Activated CD4-positive, alpha-beta T cell treated with anti-CD3 and anti-CD28 coated beads, Interleukin-2, amount 10 ng/mL, durations not matched to agents 24 days and 14 days (primary cell): ENCODE measurements at regions of chr14 and their contacts with region 1.

Region 1: DNA sequence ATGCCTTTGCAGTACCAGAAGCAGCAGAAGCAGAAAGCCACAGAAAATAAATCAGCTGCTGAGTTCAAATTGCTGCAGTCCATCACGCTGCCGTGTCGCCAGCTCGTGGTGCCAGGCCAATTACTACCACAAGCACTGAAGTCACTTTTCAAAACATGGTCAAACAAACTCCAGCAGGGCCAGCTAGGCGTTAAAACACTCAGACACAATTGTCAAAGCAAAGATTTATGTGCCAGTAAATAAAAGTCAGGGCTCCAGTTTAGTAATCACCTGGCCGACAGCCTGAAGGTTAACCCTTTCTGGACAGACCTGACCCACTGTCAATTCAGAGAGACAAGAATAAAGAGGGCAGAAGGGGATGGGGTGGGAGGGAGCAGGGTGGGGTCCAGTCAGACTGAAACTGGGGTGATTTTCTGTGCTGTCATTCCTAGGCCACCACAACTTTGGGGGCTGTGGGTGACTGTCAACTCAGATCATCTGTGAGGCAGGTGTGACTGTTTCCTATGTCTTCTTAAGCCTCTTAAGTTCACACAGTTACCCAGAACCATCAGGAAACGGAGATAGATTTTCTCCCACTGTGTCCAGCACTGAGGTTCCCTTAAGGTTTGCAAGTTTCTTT is 109.8 kb upstream of the FUT8 start:
- DNase-seq: peak; percentile 82
- H3K4me3 Mint-ChIP-seq: peak overlapping the region; percentile 62
- H3K27ac Mint-ChIP-seq: peak overlapping the region; percentile 97
- H3K4me1 Mint-ChIP-seq: peaks cover 67% of the 10 kb centered on the region
- H3K27me3 Mint-ChIP-seq: no peaks in the 10 kb centered on the region

Region 2: DNA sequence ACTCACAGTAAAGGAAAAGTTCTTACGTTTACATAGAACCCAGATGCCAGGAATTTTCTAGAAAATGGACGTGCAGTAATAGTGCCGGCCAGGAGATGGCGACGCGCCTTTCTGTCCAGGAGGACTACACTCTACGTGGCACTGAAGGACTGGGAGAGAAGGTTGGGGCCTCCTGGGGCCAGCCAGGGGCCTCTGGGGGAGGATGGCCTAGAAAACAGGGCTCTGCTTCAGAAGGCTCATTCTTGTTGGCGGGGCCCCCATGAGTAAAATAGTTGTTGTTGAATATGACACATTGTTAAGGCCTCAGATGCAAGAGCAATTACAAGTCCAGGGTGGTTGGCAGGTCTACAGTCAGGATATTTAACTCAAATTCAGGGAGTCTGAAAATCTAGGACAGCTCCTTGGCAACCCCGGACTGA is 80.2 kb before region 1 on chr14:
- intact Hi-C with region 1: loop called (anchors 2 kb)
- DNase-seq: peak; percentile 86
- H3K4me3 Mint-ChIP-seq: no peak overlapping the region
- H3K27ac Mint-ChIP-seq: peak overlapping the region; percentile 2
- H3K4me1 Mint-ChIP-seq: peaks cover 45% of the 10 kb centered on the region
- H3K27me3 Mint-ChIP-seq: no peaks in the 10 kb centered on the region

Region 3: GRCh38 chr14:65321370-65321875 is 18.7 kb after region 1 on chr14:
- intact Hi-C with region 1: loop called (anchors 2 kb)
- DNase-seq: peak; percentile 73
- H3K4me3 Mint-ChIP-seq: peak overlapping the region; percentile 30
- H3K27ac Mint-ChIP-seq: peak overlapping the region; percentile 81
- H3K4me1 Mint-ChIP-seq: peaks cover 48% of the 10 kb centered on the region
- H3K27me3 Mint-ChIP-seq: no peaks in the 10 kb centered on the region

Region 4: DNA sequence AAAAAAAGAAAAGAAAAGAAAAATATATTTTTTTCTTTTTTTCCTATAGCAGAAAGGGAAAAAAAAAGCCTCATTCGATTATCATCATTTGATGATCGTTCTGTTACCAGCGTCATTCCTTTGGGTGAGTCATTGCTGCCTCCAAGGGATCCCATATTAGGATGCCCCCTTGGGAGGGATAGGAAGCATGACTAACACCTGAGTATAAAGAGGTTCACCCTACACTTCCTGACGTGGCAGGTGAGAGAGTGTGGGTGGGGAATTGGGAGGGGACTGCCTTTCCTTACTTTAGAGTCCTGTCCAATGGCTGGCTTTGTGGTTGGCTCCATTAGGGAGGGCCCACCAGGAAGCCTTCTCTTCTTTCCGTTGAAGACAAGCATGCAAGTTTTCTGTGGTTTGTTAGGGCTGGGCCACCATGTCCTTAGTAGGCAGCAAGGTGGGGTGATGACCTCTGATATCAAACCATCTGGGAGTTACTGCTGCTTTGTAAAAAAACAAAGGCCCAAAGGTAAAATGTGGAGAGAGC is 53.7 kb after region 1 on chr14:
- intact Hi-C with region 1: loop called (anchors 2 kb)
- DNase-seq: peak; percentile 77
- H3K4me3 Mint-ChIP-seq: peak overlapping the region; percentile 34
- H3K27ac Mint-ChIP-seq: peak overlapping the region; percentile 78
- H3K4me1 Mint-ChIP-seq: peaks cover 61% of the 10 kb centered on the region
- H3K27me3 Mint-ChIP-seq: no peaks in the 10 kb centered on the region

Region 5: DNA sequence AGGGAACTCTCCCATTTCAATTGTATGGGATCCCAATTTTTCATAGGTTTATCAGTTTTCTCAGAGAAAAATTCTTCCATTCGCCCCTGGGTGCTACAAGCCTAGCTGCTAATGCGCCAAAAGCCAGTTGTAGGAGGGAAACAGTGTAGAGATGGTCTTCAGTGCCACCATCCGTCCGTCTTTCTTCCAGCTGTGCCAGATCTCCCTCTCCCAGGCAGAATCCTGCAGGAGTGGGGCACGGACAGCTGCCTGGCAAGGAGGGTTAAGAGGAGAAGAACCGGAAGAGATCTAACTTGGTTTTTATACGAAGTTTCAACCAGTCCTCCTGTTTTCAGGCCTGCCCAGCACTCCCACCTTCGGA is 71.0 kb after region 1 on chr14:
- intact Hi-C with region 1: loop called (anchors 2 kb)
- DNase-seq: no peak
- H3K4me3 Mint-ChIP-seq: no peak overlapping the region
- H3K27ac Mint-ChIP-seq: peak overlapping the region; percentile 70
- H3K4me1 Mint-ChIP-seq: peaks cover 43% of the 10 kb centered on the region
- H3K27me3 Mint-ChIP-seq: no peaks in the 10 kb centered on the region